ENCODE measurements at regions of chr11 and their contacts with region 1.

Region 1: DNA sequence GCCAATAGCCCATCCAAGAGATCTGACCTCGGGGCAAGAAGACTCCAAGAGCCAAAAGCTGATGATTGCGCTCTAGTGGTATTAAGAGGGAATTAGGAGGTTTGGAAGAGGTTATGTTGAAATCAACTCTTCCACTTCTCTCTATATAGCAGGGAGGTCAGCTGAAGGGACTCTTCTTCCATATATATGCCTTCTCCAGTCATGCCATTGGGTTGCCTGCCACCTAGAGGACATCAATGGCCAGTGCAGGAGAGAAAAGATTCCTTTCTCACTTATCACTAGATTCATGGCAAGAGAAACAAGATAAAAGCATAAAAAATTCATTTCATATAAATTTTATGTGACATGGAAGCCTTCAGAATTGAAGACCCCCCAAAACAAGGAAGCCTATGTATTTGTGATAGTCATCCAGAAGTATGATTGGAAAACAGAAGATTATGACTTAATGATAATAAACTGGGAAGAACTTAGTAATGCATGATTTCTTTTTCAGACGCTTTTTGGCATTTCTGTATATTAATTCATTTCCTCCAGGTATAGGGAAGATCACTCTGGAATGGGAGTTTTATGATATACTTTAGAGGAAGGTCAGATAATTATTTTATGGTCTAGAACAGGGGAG is 435.1 kb upstream of the DDI1 start:
- DNase-seq: peak; percentile 48
- H3K4me3 ChIP-seq: no peak overlapping the region
- H3K27ac ChIP-seq: no peak overlapping the region
- H3K27me3 ChIP-seq: no peaks in the 10 kb centered on the region
- CTCF ChIP-seq: peak; percentile 94

Region 2: DNA sequence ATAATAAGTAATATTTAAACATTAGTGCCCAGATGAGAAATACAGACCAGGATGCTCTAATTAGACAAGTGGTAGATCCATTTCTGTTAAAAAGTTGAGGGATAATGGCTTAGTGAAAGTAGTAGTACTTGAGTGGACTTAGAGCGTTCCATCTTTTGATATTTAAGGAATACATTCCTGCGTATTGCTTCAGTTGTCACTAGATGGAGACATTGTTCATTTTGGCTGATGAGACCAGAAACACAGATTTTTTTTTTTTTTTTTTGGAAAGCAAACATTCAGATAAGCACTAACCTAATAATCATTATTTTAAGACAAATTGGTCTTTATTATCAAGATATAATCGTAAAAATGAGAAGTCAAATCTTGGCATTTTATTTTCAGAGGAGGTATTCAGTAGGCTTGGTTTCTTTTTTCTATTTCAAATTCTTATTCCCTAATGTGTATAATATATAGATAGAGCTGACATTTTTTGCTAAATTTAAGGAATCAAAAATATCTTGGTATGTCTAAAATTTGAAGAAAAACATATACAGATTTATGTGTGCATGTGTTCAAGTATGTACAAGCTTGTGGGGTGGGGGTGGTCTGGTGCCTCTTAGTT is 399.2 kb before region 1 on chr11:
- CTCF ChIA-PET with region 1: interaction called, 12 read pairs
- POLR2A ChIA-PET with region 1: no interaction called
- DNase-seq: peak; percentile 11
- H3K4me3 ChIP-seq: no peak overlapping the region
- H3K27ac ChIP-seq: no peak overlapping the region
- H3K27me3 ChIP-seq: no peaks in the 10 kb centered on the region
- CTCF ChIP-seq: peak; percentile 83

Region 3: GRCh38 chr11:103257360-103257759 is 344.0 kb before region 1 on chr11:
- CTCF ChIA-PET with region 1: interaction called, 10 read pairs
- POLR2A ChIA-PET with region 1: no interaction called
- DNase-seq: no peak
- H3K4me3 ChIP-seq: no peak overlapping the region
- H3K27ac ChIP-seq: no peak overlapping the region
- H3K27me3 ChIP-seq: no peaks in the 10 kb centered on the region
- CTCF ChIP-seq: peak; percentile 59

Region 4: GRCh38 chr11:103326070-103326794 is 275.1 kb before region 1 on chr11:
- CTCF ChIA-PET with region 1: interaction called, 34 read pairs
- POLR2A ChIA-PET with region 1: no interaction called
- DNase-seq: peak; percentile 45
- H3K4me3 ChIP-seq: no peak overlapping the region
- H3K27ac ChIP-seq: no peak overlapping the region
- H3K27me3 ChIP-seq: no peaks in the 10 kb centered on the region
- CTCF ChIP-seq: peak; percentile 87

Region 5: GRCh38 chr11:103690356-103690755 is 89.0 kb after region 1 on chr11:
- CTCF ChIA-PET with region 1: no interaction called
- POLR2A ChIA-PET with region 1: no interaction called
- DNase-seq: no peak
- H3K4me3 ChIP-seq: no peak overlapping the region
- H3K27ac ChIP-seq: no peak overlapping the region
- H3K27me3 ChIP-seq: no peaks in the 10 kb centered on the region
- CTCF ChIP-seq: no peak

Measured in AG04450 (cell line).